ENCODE measurements at regions of chr4 and their contacts with region 1.

Region 1: GRCh38 chr4:153432968-153433753 is 33.0 kb upstream of the TMEM131L start:
- DNase-seq: peak; percentile 55
- ATAC-seq: peak; percentile 83
- H3K4me3 Mint-ChIP-seq: peak overlapping the region; percentile 86
- H3K27ac Mint-ChIP-seq: peak overlapping the region; percentile 97
- H3K4me1 Mint-ChIP-seq: peaks cover 53% of the 10 kb centered on the region
- H3K27me3 Mint-ChIP-seq: no peaks in the 10 kb centered on the region

Region 2: DNA sequence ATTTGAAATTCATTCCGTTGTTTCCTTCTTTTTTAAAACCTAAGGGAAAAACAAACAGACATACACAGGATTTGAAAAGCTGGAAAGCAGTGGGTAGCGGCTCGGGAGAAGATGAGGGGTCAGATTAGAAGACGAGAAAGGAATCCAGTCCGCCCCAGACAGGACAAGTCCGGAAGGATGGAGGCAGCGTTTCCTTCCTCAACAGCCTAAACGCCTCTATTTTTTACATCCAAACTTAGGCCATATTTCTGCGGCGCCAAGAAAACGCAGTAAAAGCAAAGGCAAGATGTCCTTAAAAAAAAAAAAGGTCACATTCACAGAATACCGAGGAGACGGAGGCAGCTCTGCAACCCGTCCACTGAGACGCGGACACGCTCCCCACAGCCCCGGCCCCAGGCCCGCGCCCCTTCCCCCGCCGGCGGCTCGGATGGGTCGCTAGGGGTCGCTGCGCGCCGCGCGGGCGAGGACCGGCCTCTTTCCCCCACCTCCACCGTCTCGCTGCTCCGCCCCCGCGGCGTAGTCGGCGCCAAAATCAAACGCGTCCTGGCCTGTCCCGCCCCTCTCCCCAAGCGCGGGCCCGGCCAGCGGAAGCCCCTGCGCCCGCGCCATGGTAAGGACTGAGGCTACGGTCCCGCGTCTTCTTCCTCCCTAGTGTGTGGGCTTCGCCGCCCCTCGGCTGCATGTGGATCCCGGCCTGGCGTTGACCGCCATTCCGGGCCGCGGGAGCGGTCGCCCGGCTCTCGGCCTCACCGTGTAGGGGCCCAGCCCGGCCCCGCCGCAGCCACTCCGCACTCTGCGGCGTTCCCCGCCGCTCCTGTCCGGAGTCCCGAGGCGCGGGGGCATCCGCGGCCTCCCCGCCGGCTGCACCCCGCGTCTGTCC is 88.8 kb before region 1 on chr4 and contains the start of gene MND1:
- POLR2A ChIA-PET with region 1: interaction called, 11 read pairs
- DNase-seq: peak; percentile 97
- ATAC-seq: peak; percentile 93
- H3K4me3 Mint-ChIP-seq: peak within 1 kb of the TSS; percentile 96
- H3K27ac Mint-ChIP-seq: peak within 1 kb of the TSS; percentile 93
- H3K4me1 Mint-ChIP-seq: peaks cover 34% of the 10 kb centered on the region
- H3K27me3 Mint-ChIP-seq: peaks cover 20% of the 10 kb centered on the region
- total RNA-seq, gene MND1: 29.1 to 31.8 TPM

Region 3: GRCh38 chr4:153573881-153574802 is 141.0 kb after region 1 on chr4:
- POLR2A ChIA-PET with region 1: interaction called, 11 read pairs
- DNase-seq: peak; percentile 58
- ATAC-seq: peak; percentile 97
- H3K4me3 Mint-ChIP-seq: peak overlapping the region; percentile 47
- H3K27ac Mint-ChIP-seq: peak overlapping the region; percentile 67
- H3K4me1 Mint-ChIP-seq: peaks cover 60% of the 10 kb centered on the region
- H3K27me3 Mint-ChIP-seq: no peaks in the 10 kb centered on the region

Region 4: DNA sequence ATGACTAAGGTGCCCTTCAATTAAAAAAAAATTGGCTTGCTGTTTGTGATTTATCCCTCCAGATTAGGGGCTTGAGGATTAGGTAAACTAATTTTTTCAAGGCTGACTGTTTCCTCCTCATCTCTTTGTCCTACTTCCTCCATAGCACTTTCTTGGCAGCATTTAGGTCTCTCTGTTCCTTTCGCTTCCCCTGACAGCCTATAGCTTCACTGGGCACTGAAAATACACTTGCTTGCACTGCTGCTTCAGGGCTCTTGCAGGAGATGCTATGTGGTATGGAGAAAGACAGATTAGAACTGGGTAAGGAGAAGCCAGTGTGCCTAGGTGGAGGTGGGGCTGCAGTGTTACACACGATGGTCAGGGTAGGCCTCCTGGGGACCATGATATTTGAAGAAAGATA is 468.1 kb after region 1 on chr4:
- POLR2A ChIA-PET with region 1: no interaction called
- DNase-seq: no peak
- ATAC-seq: no peak
- H3K4me3 Mint-ChIP-seq: no peak overlapping the region
- H3K27ac Mint-ChIP-seq: no peak overlapping the region
- H3K4me1 Mint-ChIP-seq: no peaks in the 10 kb centered on the region
- H3K27me3 Mint-ChIP-seq: peaks cover 5% of the 10 kb centered on the region